Esophagus squamous epithelium (tissue), 5 donors: ENCODE measurements at regions of chr4 and their contacts with region 1.

Region 1: GRCh38 chr4:88514557-88515511 is 8.7 kb downstream of the PYURF start:
- DNase-seq: no peak
- H3K4me3 ChIP-seq: no peak overlapping the region
- H3K27ac ChIP-seq: no peak overlapping the region
- H3K4me1 ChIP-seq: peaks cover 0 to 3% (median 0%) of the 10 kb centered on the region in 3 donors
- H3K27me3 ChIP-seq: no peaks in the 10 kb centered on the region
- CTCF ChIP-seq: no peak
- POLR2A ChIP-seq: no peak

Region 2: DNA sequence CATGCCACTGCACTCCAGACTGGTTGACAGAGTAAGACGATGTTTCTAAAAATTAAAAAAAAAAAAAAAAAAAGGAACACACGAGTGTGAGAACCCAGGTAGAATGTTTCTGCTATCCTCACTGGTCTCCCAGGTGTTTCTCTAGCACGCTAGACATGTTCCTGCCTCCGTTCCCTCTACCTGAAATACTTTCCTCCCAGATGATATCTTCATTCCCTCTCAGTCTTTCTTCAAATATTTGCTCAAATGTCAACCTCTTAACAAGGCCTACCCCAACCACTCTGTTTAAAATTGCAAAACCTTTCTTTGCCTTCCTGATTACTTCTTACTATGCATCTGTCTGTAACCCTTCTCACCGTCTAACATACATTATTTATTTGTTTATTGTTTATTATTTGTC is 296.9 kb before region 1 on chr4:
- intact Hi-C with region 1: loop called (anchors 2 kb)
- DNase-seq: no peak
- H3K4me3 ChIP-seq: no peak overlapping the region
- H3K27ac ChIP-seq: no peak overlapping the region
- H3K4me1 ChIP-seq: peaks cover 0 to 4% (median 0%) of the 10 kb centered on the region in 3 donors
- H3K27me3 ChIP-seq: no peaks in the 10 kb centered on the region
- CTCF ChIP-seq: no peak
- POLR2A ChIP-seq: no peak

Region 3: DNA sequence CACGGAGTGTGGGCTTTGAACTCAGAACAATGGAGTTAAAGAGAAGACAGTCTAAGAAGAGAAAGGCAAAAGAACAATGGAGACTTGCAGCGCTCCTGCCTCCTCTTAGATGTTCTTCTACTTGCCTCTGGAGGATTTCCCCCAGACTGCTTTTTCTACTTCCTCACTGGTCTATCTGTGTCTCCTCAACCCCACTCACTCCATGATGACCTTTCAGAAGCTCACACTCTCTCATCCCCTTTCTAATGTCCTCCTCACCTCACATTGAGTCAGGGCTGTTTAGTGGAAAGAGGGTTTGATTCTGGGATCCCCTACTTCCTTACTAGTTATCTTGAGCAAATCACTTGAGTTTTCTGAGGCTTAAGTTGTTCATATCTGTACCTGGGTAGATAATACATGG is 148.4 kb before region 1 on chr4:
- intact Hi-C with region 1: loop called (anchors 5 kb)
- DNase-seq: no peak
- H3K4me3 ChIP-seq: no peak overlapping the region
- H3K27ac ChIP-seq: no peak overlapping the region
- H3K4me1 ChIP-seq: no peaks in the 10 kb centered on the region
- H3K27me3 ChIP-seq: no peaks in the 10 kb centered on the region
- CTCF ChIP-seq: no peak
- POLR2A ChIP-seq: no peak